RWPE1 (cell line): ENCODE measurements at regions of chr19 and their contacts with region 1.

Region 1: GRCh38 chr19:41449079-41449864 is 6.3 kb downstream of the ERICH4 start:
- DNase-seq: peak; percentile 83
- H3K27ac ChIP-seq: no peak overlapping the region
- CTCF ChIP-seq: peak; percentile 97

Region 2: DNA sequence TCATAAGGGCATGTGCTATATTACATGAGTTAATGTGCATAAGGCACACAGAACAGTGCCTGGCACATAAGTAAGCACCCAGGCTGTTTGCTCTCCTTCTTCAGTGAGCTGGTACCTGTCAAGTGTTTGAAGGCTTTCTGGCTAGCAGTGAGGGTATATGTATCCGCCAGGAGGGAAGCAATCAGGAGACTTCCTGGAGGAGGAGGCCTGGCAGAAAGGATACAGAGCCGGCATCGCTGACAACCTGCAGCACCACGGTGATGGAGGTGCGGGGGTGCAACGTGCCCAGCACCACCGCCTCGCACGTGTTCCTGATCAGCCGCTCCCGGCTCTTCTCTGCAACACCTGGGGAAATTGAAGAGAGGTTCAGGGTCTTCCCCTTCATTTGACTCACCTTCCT is 57.7 kb before region 1 on chr19:
- CTCF ChIA-PET with region 1: no interaction called
- POLR2A ChIA-PET with region 1: no interaction called
- DNase-seq: no peak
- H3K27ac ChIP-seq: peak overlapping the region; percentile 28; the same call in 1 of the 2 replicates
- CTCF ChIP-seq: no peak

Region 3: DNA sequence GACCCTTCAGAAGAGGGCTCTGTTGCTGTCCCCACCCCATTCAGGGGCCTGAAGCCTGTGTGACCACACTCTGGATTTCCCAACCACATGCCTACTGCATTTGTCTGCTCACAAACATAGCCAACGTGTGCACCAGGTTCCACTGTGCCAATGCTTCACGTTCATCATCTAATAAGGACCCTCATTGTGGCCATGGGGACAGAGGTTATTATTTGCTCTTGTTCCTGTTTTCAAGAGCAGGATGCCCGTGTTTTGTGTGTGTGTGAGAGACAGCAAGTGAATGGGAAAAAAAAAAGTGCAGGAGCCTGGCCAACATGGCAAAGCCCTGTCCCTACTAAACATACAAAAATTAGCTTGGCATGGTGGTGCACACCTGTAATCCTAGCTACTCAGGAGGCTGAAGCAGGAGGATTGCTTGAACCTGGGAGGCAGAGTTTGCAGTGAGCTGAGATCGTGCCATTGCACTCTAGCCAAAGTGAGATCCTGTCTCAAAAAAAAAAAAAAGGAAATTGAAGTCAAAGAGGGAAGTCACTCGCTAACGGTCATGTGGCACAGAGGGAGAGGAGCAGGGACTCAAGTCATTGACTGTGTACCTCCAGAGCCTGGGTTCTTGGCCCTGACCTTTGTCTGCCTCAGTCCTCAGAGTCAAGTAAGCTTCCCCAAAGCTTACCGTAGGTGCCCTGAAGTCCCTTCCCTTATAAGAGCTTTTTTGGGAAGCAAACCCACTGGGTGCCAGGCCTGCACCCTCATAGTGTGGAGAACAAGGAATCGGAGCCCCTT is 29.0 kb before region 1 on chr19:
- CTCF ChIA-PET with region 1: no interaction called
- POLR2A ChIA-PET with region 1: no interaction called
- DNase-seq: no peak
- H3K27ac ChIP-seq: no peak overlapping the region
- CTCF ChIP-seq: no peak

Region 4: GRCh38 chr19:41541990-41542584 is 92.8 kb after region 1 on chr19:
- CTCF ChIA-PET with region 1: interaction called, 10 read pairs
- POLR2A ChIA-PET with region 1: no interaction called
- DNase-seq: no peak
- H3K27ac ChIP-seq: no peak overlapping the region
- CTCF ChIP-seq: peak; percentile 43

Region 5: DNA sequence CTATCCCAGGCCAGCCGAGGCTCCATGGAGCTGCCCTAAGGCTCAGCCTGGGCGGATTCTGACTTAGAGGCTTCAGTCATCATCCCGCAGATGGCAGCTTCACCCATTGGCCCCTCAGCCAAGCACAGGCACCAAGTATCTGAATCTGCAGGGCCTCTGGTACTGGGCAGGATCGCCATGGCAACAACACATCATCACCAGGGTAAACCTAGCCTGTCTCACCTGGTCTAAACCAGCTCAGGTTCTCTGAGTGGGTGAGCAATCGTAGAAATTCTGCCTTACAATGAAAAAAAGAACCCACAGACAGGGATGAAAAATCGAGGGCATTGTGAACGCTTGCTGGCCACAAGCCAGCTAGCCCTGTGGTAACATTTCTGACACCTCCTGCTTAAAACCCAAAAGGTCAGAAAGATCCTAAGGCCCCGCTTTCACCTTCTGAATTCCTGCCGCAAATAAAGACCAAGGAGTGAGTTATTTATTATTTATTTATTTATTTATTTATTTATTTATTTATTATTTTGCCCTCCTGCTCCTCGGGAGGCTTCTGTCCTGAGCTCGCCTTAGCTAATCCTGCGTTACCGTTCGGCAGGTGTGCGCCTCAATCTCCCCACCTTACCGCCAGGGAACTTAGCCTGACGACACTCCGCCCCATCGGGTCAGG is 114.7 kb after region 1 on chr19:
- CTCF ChIA-PET with region 1: interaction called, 39 read pairs
- POLR2A ChIA-PET with region 1: no interaction called
- DNase-seq: peak; percentile 10
- H3K27ac ChIP-seq: no peak overlapping the region
- CTCF ChIP-seq: no peak

Region 6: GRCh38 chr19:41570639-41571112 is 121.4 kb after region 1 on chr19:
- CTCF ChIA-PET with region 1: interaction called, 36 read pairs
- POLR2A ChIA-PET with region 1: no interaction called
- DNase-seq: peak; percentile 70
- H3K27ac ChIP-seq: no peak overlapping the region
- CTCF ChIP-seq: peak; percentile 91